CD4-positive, alpha-beta T cell (primary cell): ENCODE measurements at regions of chr1 and their contacts with region 1.

Region 1: GRCh38 chr1:181021811-181022434 is 747 bp downstream of the STX6 start:
- DNase-seq: peak in 13 of 14 experiments; percentile 22 to 80 (median 44)
- ATAC-seq: peak; percentile 40
- H3K4me3 ChIP-seq: peak overlapping the region; percentile 76
- H3K4me3 Mint-ChIP-seq: peak overlapping the region; percentile 99
- H3K27ac ChIP-seq: peak overlapping the region; percentile 53 to 83
- H3K27ac Mint-ChIP-seq: peak overlapping the region; percentile 98
- H3K4me1 ChIP-seq: peaks cover 26% of the 10 kb centered on the region
- H3K4me1 Mint-ChIP-seq: peaks cover 47% of the 10 kb centered on the region
- H3K27me3 ChIP-seq: no peaks in the 10 kb centered on the region
- H3K27me3 Mint-ChIP-seq: peaks cover 12% of the 10 kb centered on the region
- CTCF ChIP-seq: no peak

Region 2: DNA sequence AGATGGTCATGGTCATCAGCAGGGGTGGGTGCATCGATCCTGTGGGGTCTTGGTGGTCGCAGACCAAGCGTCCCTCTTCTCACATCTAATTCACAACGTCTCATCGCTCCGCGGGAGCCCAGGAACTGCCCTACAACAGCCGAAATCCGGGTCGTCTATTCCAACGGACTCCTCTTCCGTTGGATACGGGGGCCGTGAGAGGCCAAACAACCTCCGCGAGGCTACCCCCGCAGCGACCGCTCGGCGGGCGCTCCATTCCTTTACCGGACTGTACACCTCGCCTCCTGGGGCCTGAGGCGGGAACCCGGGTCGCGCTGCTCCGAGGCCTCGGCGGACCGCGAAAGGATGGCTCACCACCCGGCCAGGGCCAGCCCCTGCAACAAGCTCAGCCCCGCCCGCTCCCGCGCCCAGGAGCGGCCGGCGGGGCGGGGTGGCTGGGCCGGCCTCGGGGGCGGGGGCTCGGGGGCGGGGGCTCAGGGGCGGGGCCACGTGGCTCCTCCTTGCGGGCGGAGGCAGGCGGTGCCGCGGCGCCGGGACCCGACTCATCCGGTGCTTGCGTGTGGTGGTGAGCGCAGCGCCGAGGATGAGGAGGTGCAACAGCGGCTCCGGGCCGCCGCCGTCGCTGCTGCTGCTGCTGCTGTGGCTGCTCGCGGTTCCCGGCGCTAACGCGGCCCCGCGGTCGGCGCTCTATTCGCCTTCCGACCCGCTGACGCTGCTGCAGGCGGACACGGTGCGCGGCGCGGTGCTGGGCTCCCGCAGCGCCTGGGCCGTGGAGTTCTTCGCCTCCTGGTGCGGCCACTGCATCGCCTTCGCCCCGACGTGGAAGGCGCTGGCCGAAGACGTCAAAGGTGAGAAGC is 867.4 kb before region 1 on chr1 and contains the start of gene QSOX1:
- CTCF ChIA-PET with region 1: no interaction called
- POLR2A ChIA-PET with region 1: no interaction called
- intact Hi-C with region 1: loop called in 1 of 2 experiments (anchors 10 kb)
- DNase-seq: peak; percentile 80 to 97 (median 86)
- ATAC-seq: peak; percentile 97
- H3K4me3 ChIP-seq: peak within 1 kb of the TSS; percentile 90
- H3K4me3 Mint-ChIP-seq: peak within 1 kb of the TSS; percentile 95
- H3K27ac ChIP-seq: peak within 1 kb of the TSS; percentile 19 to 42
- H3K27ac Mint-ChIP-seq: peak within 1 kb of the TSS; percentile 82
- H3K4me1 ChIP-seq: peaks cover 27% of the 10 kb centered on the region
- H3K4me1 Mint-ChIP-seq: peaks cover 33% of the 10 kb centered on the region
- H3K27me3 ChIP-seq: no peaks in the 10 kb centered on the region
- H3K27me3 Mint-ChIP-seq: no peaks in the 10 kb centered on the region
- CTCF ChIP-seq: no peak
- total RNA-seq, gene QSOX1: 13.7 to 14.3 TPM

Region 3: DNA sequence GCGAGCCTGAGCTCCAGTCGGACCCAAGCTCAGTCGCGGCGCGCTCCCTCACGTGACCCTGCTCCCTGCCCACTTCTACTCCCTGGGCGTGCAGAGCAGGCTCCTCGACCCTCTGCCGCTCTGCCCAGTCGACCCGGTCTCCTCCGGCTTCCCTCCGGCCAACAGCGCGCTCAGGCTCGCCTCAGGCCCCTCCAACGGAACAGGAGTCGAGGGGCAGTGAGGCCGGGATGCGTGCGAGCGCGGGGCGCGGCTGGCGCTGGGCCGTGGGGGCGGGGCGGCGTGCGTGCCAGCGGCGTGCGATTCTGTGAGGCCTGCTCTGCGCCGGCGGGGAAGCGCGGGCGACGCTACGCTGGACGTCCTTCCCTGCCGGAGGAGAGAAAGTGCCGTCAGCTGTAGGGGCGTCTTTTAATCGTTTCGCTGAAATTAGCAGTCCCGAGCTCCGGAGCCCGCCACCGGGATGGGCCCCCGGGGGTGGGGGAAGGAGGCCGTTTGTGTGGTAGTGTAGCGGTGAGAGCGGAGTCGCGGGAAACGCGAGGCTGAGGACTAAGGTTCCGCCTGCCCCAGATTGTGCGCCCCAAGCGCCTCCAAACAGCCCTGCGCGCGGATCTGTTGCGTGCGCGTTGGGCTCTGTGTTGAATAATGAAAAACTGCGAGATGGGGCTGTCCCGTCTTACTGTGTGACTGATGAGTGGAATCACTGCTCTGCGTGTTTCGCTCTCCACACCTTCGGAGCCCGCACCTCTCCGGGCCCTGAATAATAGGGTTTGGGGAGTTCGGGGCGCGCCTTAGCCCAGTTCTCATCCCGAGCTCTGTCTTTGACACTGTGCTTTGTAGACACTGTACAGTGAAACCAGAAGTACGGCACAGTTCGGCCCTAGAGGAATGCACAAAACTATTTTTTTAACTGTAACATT is 519.3 kb before region 1 on chr1 and contains the start of gene ACBD6:
- CTCF ChIA-PET with region 1: no interaction called
- POLR2A ChIA-PET with region 1: no interaction called
- intact Hi-C with region 1: loop called in 1 of 2 experiments (anchors 5 kb)
- DNase-seq: peak; percentile 76 to 94 (median 83)
- ATAC-seq: peak; percentile 90
- H3K4me3 ChIP-seq: peak within 1 kb of the TSS; percentile 98
- H3K4me3 Mint-ChIP-seq: peak within 1 kb of the TSS; percentile 92
- H3K27ac ChIP-seq: peak within 1 kb of the TSS; percentile 74 to 85
- H3K27ac Mint-ChIP-seq: peak within 1 kb of the TSS; percentile 94
- H3K4me1 ChIP-seq: peaks cover 23% of the 10 kb centered on the region
- H3K4me1 Mint-ChIP-seq: peaks cover 43% of the 10 kb centered on the region
- H3K27me3 ChIP-seq: no peaks in the 10 kb centered on the region
- H3K27me3 Mint-ChIP-seq: no peaks in the 10 kb centered on the region
- CTCF ChIP-seq: no peak
- total RNA-seq, gene ACBD6: 28.2 to 28.8 TPM

Region 4: DNA sequence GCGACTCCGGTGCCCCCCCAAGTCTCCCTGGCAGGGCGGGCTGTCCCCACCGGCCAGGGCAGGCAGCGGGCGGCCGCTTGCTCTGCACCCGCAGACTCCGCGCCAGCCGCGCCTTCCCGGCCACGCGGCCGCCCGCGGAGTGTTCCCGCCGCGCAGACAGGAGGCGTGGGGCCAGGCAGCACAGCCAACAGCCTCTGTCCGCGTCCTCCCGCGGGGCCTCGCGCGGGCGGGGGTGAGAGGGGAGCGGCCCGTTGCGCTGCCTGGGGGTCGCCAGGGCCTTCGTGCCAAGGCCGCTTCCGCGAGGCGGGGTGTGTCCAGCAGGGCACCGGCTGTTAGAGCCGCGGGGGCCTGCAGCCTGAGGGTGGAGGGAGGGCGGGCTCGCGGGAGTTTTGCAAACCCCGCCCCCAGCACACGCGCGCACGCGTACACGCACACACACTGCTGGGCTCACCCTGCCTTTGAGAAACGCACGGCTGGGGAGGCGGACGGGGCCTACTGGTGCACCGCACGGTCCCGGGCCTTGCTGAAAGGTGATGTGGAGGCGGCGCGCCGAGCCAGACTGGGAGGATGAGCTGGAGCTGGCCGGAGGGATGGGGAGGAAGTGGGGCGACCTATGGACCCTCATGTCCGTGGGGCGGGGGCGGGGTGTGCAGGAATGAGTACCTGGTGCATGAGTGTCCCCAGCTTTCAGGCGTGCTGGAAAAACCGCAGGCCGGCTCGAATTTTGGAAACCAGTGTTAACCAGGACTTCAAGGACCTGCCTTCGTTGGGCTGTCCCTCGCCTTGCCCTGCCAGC is 67.7 kb before region 1 on chr1:
- CTCF ChIA-PET with region 1: no interaction called
- POLR2A ChIA-PET with region 1: no interaction called
- intact Hi-C with region 1: loop called in 1 of 2 experiments (anchors 5 kb)
- DNase-seq: peak; percentile 38 to 89 (median 64)
- ATAC-seq: peak; percentile 95
- H3K4me3 ChIP-seq: peak overlapping the region; percentile 54
- H3K4me3 Mint-ChIP-seq: peak overlapping the region; percentile 72
- H3K27ac ChIP-seq: no peak overlapping the region
- H3K27ac Mint-ChIP-seq: peak overlapping the region; percentile 17
- H3K4me1 ChIP-seq: peaks cover 15% of the 10 kb centered on the region
- H3K4me1 Mint-ChIP-seq: peaks cover 4% of the 10 kb centered on the region
- H3K27me3 ChIP-seq: no peaks in the 10 kb centered on the region
- H3K27me3 Mint-ChIP-seq: no peaks in the 10 kb centered on the region
- CTCF ChIP-seq: no peak

Region 5: DNA sequence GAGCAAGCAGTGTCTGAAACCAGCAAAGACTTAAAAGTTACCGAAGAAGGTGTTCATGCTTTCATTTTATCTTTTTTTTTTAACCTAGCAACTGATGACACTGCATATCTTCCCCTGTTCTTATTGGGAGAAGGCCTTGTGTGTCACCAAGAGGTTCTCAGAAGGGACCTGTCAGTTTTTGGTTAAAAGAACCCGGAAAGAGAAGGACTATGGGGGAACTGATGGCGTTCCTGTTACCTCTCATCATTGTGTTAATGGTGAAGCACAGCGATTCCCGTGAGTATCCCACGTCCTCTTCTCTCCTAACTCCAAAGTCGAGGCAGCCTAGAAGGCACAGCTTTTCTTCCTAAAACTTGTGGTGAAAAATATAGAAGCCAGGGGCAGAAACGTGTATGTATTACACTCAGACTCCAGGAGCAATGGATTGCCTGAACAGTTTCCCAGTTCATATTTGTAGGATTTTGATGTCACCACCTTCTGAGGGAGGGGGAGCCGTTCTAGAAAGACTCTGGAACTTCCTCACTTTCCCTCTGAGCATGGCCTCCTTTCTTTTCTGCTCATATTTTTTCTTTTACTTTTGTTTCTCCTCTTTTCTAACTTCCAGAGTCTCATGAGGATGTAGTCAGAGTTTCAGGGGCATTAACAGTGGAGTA is 12.0 kb after region 1 on chr1 and contains the start of gene MR1:
- CTCF ChIA-PET with region 1: interaction called, 11 read pairs
- POLR2A ChIA-PET with region 1: interaction called, 52 read pairs
- intact Hi-C with region 1: loop called (anchors 1 kb)
- DNase-seq: peak in 8 of 14 experiments; percentile 19 to 92 (median 42)
- ATAC-seq: peak; percentile 97
- H3K4me3 ChIP-seq: peak within 1 kb of the TSS; percentile 78
- H3K4me3 Mint-ChIP-seq: peak within 1 kb of the TSS; percentile 97
- H3K27ac ChIP-seq: peak within 1 kb of the TSS; percentile 87 to 97
- H3K27ac Mint-ChIP-seq: peak within 1 kb of the TSS; percentile 92
- H3K4me1 ChIP-seq: peaks cover 47% of the 10 kb centered on the region
- H3K4me1 Mint-ChIP-seq: peaks cover 64% of the 10 kb centered on the region
- H3K27me3 ChIP-seq: no peaks in the 10 kb centered on the region
- H3K27me3 Mint-ChIP-seq: no peaks in the 10 kb centered on the region
- CTCF ChIP-seq: no peak
- total RNA-seq, gene MR1: 16.2 to 18.1 TPM

Region 6: GRCh38 chr1:181049378-181049777 is 27.5 kb after region 1 on chr1:
- CTCF ChIA-PET with region 1: no interaction called
- POLR2A ChIA-PET with region 1: no interaction called
- intact Hi-C with region 1: no loop called
- DNase-seq: no peak
- ATAC-seq: no peak
- H3K4me3 ChIP-seq: no peak overlapping the region
- H3K4me3 Mint-ChIP-seq: no peak overlapping the region
- H3K27ac ChIP-seq: no peak overlapping the region
- H3K27ac Mint-ChIP-seq: no peak overlapping the region
- H3K4me1 ChIP-seq: peaks cover 4% of the 10 kb centered on the region
- H3K4me1 Mint-ChIP-seq: peaks cover 8% of the 10 kb centered on the region
- H3K27me3 ChIP-seq: no peaks in the 10 kb centered on the region
- H3K27me3 Mint-ChIP-seq: no peaks in the 10 kb centered on the region
- CTCF ChIP-seq: no peak